Endothelial cell of umbilical vein (primary cell): ENCODE measurements at regions of chr12 and their contacts with region 1.

Region 1: DNA sequence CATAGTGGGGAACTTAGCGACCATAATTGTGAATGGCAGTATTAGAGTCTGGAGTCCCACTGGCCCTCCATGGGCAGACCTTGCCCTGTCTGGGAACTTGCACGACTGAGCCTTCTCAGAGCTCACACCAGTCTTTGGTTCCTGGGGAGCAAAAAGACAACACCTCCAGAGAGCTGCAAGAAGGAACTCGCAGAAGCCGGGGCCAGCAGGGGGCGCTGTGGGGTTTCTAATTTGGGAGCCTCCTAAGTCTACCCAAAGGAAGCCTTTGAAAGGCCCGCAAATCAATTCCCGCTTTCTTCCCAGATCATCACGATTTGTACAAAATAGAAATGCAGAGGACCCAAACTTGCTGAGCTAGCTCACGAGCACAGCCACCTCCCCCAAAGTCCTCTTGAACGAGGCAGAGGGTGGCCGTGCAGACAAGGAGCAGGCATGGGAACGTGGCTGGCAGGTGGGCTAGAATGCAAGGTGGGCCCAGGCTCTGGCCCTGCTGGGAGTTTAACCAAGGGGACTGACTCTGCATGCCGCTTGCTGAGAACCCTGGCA is 46.3 kb upstream of the FBXO21 start:
- DNase-seq: peak; percentile 45
- H3K4me3 ChIP-seq: no peak overlapping the region
- H3K27ac ChIP-seq: no peak overlapping the region
- H3K4me1 ChIP-seq: no peaks in the 10 kb centered on the region
- H3K27me3 ChIP-seq: no peaks in the 10 kb centered on the region
- CTCF ChIP-seq: peak; percentile 78 to 91
- POLR2A ChIP-seq: no peak

Region 2: DNA sequence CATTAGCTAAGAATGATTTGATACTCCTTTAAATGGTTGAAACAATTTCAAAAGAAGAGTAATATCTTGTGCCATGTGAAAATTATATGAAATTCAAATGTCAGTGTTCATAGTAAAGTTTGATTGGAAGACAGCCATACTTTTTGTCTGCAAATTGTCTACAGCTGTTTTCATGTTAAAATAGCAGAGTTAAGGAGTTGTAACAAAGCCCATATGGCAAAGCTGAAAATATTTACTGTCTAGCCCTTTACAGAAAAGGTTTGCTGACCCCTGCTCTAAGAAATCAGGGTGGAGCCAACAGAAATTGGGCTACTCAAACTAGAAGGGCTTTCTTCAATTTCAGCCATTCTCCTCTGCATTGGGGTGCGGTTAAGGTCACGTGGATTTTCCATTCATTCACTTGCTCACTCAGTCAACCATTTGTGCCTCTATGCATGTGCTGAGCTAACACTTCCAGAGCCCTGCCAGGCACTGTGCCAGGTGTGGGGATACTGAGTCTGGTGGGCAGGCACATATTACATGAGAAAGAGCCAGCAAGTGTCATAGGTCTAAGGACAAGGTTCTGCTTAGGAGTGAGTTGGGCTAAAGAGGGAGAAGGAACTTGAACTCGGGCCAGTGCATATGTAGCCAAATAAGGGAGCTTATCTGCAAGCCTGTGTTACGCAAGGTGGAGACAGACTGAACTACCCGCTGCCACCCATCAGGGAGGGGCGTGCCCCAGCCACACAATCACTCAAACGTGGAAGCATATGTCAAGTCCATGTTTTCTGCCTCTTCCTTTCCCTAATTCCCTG is 264.7 kb after region 1 on chr12:
- CTCF ChIA-PET with region 1: no interaction called
- POLR2A ChIA-PET with region 1: no interaction called
- dilution Hi-C with region 1: no loop called
- intact Hi-C with region 1: no loop called
- DNase-seq: no peak
- H3K4me3 ChIP-seq: no peak overlapping the region
- H3K27ac ChIP-seq: no peak overlapping the region
- H3K4me1 ChIP-seq: no peaks in the 10 kb centered on the region
- H3K27me3 ChIP-seq: no peaks in the 10 kb centered on the region
- CTCF ChIP-seq: no peak
- POLR2A ChIP-seq: no peak

Region 3: DNA sequence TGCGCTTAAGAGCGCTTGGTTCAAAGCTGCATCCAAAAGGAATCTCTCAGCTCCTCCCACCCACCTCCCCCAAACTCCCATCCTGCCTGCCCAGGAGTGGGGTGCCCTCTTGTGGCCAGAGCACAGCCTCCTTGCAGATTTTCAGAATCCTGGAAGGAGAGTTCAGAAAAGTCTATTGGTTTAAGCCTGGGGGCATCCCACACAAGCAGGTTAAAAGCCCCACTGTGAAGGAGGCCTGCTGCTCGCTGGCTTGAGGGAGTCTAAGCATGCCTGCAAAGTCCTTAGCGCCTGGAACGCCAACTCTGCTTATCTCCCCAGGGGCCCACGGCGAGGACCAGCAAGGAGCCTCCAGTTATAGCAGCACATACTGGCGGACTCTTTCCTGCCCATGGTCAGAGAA is 435.2 kb after region 1 on chr12:
- CTCF ChIA-PET with region 1: interaction called, 5 read pairs
- POLR2A ChIA-PET with region 1: no interaction called
- dilution Hi-C with region 1: no loop called
- intact Hi-C with region 1: loop called (anchors 5 kb)
- DNase-seq: peak; percentile 44
- H3K4me3 ChIP-seq: no peak overlapping the region
- H3K27ac ChIP-seq: no peak overlapping the region
- H3K4me1 ChIP-seq: peaks cover 33% of the 10 kb centered on the region
- H3K27me3 ChIP-seq: no peaks in the 10 kb centered on the region
- CTCF ChIP-seq: peak; percentile 39 to 67
- POLR2A ChIP-seq: no peak

Region 4: GRCh38 chr12:117850048-117850447 is 613.5 kb after region 1 on chr12:
- CTCF ChIA-PET with region 1: interaction called, 147 read pairs
- POLR2A ChIA-PET with region 1: no interaction called
- dilution Hi-C with region 1: no loop called
- intact Hi-C with region 1: loop called (anchors 1 kb)
- DNase-seq: peak; percentile 54
- H3K4me3 ChIP-seq: no peak overlapping the region
- H3K27ac ChIP-seq: no peak overlapping the region
- H3K4me1 ChIP-seq: no peaks in the 10 kb centered on the region
- H3K27me3 ChIP-seq: peaks cover 6% of the 10 kb centered on the region in 2 experiments
- CTCF ChIP-seq: peak; percentile 86 to 88
- POLR2A ChIP-seq: no peak